ENCODE measurements at regions of chr19 and their contacts with region 1.

Region 1: GRCh38 chr19:41570639-41571112 is 5.3 kb upstream of the CEACAM21 start:
- DNase-seq: no peak
- H3K4me3 ChIP-seq: no peak overlapping the region
- H3K27me3 ChIP-seq: peaks cover 4% of the 10 kb centered on the region; the same call in 1 of the 2 replicates
- CTCF ChIP-seq: peak; percentile 92

Region 2: DNA sequence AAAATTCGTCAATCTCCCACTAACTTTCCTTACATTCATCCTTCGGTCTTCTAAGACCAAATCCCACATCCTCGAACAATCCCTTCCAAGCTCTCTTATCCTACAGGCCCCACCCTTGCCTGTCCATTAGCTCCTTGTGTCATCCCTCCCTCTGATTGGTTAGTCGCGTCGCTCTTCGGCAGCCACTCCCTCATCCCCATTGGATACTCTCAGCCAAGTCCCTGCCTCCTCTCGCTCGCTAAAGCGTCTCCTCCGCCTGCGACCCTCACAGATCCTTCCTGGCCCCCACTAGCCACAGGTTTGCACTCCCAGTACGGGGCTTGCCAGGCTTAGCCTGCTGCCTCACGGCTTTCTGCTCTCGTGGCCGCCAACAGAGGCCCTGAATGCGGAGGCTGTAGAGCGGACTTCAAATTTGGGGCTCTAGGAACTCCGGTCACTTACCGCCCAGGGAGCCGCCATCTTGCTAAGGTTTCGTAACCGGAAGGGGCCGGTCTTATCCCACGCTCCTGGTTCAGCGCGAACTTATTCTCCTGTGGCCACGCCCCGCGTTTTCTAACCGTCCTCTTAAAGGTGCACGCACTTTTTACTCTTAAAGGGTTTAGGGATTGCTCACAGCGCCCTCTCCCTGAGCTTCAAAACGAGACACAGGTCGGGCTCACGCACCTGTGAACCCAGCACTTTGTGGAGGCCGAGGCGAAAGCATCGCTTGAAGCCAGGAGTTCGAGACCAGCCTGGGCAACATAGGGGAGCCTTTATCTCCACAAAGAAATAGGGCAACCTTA is 131.0 kb before region 1 on chr19 and contains the start of gene DMAC2:
- CTCF ChIA-PET with region 1: interaction called, 205 read pairs
- POLR2A ChIA-PET with region 1: no interaction called
- DNase-seq: peak; percentile 90
- H3K4me3 ChIP-seq: peak within 1 kb of the TSS; percentile 80
- H3K27me3 ChIP-seq: no peaks in the 10 kb centered on the region
- CTCF ChIP-seq: peak; percentile 57
- polyA plus RNA-seq, gene DMAC2: 54.0 and 82.4 TPM in 2 replicates

Region 3: DNA sequence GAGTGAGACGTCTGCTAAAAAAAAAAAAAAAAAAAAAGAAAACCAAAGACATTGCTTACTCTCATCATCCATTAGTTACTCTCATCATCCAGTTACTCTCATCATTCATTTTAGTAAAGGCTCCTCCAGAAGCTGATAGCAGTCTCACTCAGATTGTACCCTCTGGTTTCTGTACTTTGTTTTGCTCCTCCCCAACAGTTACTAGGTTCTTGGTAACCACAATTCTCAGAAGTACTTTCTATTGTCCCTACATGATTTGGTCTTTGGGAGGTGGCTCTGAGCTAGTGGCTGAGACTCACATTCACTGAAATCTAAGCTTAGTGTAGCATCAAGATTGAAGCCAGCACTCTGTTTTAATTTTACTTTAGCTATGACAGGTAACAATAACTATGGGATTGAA is 113.4 kb before region 1 on chr19:
- CTCF ChIA-PET with region 1: interaction called, 205 read pairs
- POLR2A ChIA-PET with region 1: no interaction called
- DNase-seq: no peak
- H3K4me3 ChIP-seq: no peak overlapping the region
- H3K27me3 ChIP-seq: peaks cover 3% of the 10 kb centered on the region; the same call in 1 of the 2 replicates
- CTCF ChIP-seq: no peak

Region 4: GRCh38 chr19:41515015-41515652 is 55.5 kb before region 1 on chr19:
- CTCF ChIA-PET with region 1: no interaction called
- POLR2A ChIA-PET with region 1: no interaction called
- DNase-seq: no peak
- H3K4me3 ChIP-seq: no peak overlapping the region
- H3K27me3 ChIP-seq: peaks cover 2% of the 10 kb centered on the region; the same call in 1 of the 2 replicates
- CTCF ChIP-seq: no peak

Region 5: GRCh38 chr19:41541990-41542584 is 28.6 kb before region 1 on chr19:
- CTCF ChIA-PET with region 1: interaction called, 10 read pairs
- POLR2A ChIA-PET with region 1: no interaction called
- DNase-seq: no peak
- H3K4me3 ChIP-seq: no peak overlapping the region
- H3K27me3 ChIP-seq: peaks cover 6% of the 10 kb centered on the region; the same call in 1 of the 2 replicates
- CTCF ChIP-seq: peak; percentile 62

Region 6: GRCh38 chr19:41588497-41589209 is 18.0 kb after region 1 on chr19:
- CTCF ChIA-PET with region 1: interaction called, 13 read pairs
- POLR2A ChIA-PET with region 1: no interaction called
- DNase-seq: no peak
- H3K4me3 ChIP-seq: no peak overlapping the region
- H3K27me3 ChIP-seq: no peaks in the 10 kb centered on the region
- CTCF ChIP-seq: no peak

Region 7: GRCh38 chr19:41597600-41598041 is 26.9 kb after region 1 on chr19:
- CTCF ChIA-PET with region 1: interaction called, 11 read pairs
- POLR2A ChIA-PET with region 1: no interaction called
- DNase-seq: peak; percentile 4
- H3K4me3 ChIP-seq: no peak overlapping the region
- H3K27me3 ChIP-seq: no peaks in the 10 kb centered on the region
- CTCF ChIP-seq: peak; percentile 96